Left cardiac atrium (tissue), 4 donors: ENCODE measurements at regions of chr1 and their contacts with region 1.

Region 1: GRCh38 chr1:90721210-90722194 is 4.4 kb upstream of the BARHL2 start:
- DNase-seq: no peak
- ATAC-seq: no peak

Region 2: DNA sequence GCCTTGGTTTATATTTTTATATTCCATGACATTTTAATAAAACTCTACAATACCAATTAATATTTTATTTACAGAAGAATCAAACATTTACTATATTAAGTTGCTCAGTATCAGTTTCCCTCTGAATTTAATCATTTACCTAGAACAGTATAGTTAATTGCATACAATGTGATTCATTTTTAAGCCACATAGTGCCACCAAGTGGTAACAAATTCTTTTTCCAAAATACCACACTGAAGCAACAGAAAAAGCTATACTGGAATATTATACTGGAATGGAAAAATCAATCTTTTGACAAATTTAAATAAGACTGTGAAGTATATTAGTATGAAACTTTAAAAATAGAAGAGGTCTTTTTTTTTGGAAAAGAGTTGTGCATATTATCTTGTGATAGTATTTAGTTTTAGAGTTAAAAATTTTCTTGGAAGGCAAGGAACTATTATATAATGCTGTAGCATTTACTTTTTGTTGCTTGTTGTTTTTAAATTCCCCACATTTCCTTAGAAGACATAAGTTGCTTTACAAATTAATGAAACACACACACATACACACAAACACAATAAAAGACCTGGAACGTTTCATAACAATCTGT is 243.0 kb after region 1 on chr1:
- intact Hi-C with region 1: loop called in 1 of 2 experiments (anchors 5 kb)
- DNase-seq: no peak
- ATAC-seq: no peak